IMR-90 (cell line): ENCODE measurements at regions of chr13 and their contacts with region 1.

Region 1: DNA sequence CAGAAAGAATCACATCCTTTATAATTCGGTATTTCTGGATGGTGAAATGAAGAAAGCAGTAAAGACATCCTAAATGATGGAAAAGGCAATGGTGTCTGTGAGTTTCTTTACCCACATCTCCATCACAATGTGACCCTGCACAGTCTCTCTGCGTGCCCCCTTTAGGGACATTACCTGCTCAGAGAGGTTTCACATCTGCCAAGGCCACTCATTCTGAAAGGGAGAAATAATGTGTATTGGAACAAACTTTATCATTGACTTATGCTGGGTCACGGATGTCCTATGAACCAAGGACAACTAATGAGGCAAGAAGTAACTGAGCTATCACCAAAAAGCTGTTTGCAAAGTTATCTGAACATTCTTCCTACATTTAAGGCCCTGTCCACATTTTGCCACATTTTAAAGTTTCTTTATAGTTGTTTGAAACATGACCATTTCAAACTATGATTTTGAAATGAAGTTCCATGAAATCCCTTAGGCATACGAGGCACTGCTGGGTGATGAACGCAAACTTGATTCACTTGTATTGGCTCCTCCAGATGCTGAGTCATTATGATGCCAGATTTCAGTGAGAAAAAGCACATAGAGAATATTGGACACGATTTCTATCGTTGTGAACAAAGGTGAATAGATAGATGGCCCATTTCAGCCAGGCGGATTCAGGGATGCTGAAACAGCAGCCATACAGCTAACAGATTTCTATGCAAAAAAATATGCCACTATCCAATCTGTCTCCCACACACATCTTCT is 63.5 kb upstream of the HMGB1 start:
- DNase-seq: peak; percentile 29
- ATAC-seq: no peak
- H3K4me3 ChIP-seq: no peak overlapping the region
- H3K27ac ChIP-seq: no peak overlapping the region
- H3K4me1 ChIP-seq: no peaks in the 10 kb centered on the region
- H3K27me3 ChIP-seq: no peaks in the 10 kb centered on the region
- CTCF ChIP-seq: no peak
- POLR2A ChIP-seq: no peak
- RAD21 ChIP-seq: no peak

Region 2: DNA sequence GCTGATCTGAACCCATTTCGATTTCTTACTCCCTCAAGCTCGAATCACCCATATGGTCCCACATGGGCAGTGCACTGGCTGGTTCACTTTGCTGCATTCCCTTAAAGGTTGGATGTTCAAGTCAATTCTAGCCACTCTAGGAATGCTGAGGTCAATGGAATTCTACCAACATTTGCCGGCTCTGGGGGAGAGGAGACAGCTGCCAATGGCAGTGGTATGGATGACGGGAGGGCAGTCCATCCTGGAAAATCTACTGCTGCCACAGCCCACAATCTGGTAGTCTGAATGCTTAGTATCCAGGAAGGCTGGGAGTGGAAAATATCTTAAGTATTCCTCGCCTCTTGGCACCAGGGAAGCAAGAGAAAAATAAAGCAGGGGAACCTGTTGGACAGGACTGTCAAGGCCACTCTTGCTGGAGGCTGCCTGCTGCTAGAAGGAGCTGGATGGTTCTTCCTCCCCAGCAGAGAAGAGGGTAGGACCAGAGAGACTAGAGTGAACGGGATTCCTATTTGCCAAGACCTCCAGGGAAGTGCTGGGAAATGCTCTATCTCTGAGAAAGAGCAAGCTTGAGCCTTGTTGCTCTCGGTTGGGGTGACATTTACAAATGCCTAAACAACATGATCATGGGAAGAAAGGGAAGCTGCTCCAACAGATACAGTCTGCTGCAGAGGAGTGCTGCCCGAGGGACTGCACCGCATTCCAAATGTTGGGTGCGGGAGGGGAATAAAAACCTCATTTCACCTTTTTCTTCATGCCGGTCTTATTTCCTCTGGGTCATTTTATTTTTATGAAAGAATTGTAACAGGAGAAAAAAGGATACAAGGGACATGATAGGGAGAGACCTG is 42.8 kb before region 1 on chr13:
- CTCF ChIA-PET with region 1: no interaction called
- POLR2A ChIA-PET with region 1: interaction called, 12 read pairs
- dilution Hi-C with region 1: no loop called
- in situ Hi-C with region 1: no loop called
- intact Hi-C with region 1: no loop called
- DNase-seq: no peak
- ATAC-seq: no peak
- H3K4me3 ChIP-seq: no peak overlapping the region
- H3K27ac ChIP-seq: no peak overlapping the region
- H3K4me1 ChIP-seq: no peaks in the 10 kb centered on the region
- H3K27me3 ChIP-seq: peaks cover 4% of the 10 kb centered on the region; the same call in 1 of the 2 replicates
- CTCF ChIP-seq: no peak
- POLR2A ChIP-seq: no peak
- RAD21 ChIP-seq: no peak

Region 3: DNA sequence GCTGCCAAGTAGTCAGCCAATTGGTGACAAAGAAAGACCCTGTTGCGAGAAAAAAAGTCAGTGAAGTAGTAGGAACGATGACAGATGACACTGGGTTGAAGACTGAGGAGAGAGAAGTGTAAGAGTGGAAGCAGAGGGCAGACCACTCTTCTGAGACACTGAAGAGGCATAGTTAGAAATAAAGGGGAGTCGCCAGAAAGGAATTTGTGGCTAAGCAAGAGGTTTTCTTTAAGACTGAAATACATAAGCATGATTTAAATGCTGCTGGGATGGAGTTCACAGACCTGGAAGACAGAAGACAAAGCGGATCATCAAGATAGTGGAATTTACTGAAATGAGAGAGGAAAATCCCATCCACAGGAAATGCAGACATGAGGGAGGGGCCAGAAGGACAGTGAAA is 32.3 kb after region 1 on chr13:
- CTCF ChIA-PET with region 1: no interaction called
- POLR2A ChIA-PET with region 1: no interaction called
- dilution Hi-C with region 1: no loop called
- in situ Hi-C with region 1: no loop called
- intact Hi-C with region 1: no loop called
- DNase-seq: peak; percentile 59
- ATAC-seq: no peak
- H3K4me3 ChIP-seq: no peak overlapping the region
- H3K27ac ChIP-seq: no peak overlapping the region
- H3K4me1 ChIP-seq: peaks cover 3% of the 10 kb centered on the region; the same call in 1 of the 2 replicates
- H3K27me3 ChIP-seq: no peaks in the 10 kb centered on the region
- CTCF ChIP-seq: no peak
- POLR2A ChIP-seq: no peak
- RAD21 ChIP-seq: no peak